Activated naive CD4-positive, alpha-beta T cell treated with anti-CD3 and anti-CD28 coated beads for 36 hours (primary cell): ENCODE measurements at regions of chr5 and their contacts with region 1.

Region 1: GRCh38 chr5:44536650-44537260 is 147.5 kb upstream of the FGF10 start:
- DNase-seq: peak; percentile 17
- H3K4me3 Mint-ChIP-seq: no peak overlapping the region
- H3K27ac Mint-ChIP-seq: no peak overlapping the region
- H3K4me1 Mint-ChIP-seq: no peaks in the 10 kb centered on the region
- H3K27me3 Mint-ChIP-seq: no peaks in the 10 kb centered on the region

Region 2: DNA sequence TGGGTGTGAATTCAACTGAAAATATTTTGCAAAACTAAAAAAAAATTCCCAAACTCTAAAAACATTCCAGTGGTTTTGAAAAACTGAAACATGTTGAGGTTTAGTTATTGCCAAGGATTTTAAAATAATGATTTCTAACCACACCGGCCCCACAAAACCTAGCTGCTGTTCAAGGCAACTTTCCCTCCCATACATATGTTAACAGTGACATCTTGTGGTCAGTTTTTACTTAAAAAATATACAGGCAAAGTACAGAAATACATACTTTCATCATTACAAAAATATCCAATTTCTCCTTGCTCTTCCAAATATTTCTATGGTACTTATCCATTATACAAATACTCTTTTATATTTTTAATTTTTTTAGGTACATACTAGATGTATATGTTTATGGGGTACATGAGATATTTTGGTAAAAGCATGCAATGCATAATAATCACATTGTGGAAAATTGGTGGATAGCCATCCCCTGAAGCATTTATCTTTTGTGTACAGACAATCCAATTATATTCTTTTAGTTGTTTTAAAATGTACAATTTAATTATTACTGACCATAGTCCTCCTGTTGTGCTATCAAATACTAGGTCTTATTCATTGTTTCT is 237.6 kb after region 1 on chr5:
- CTCF ChIA-PET with region 1: interaction called, 5 read pairs
- intact Hi-C with region 1: loop called (anchors 1 kb)
- DNase-seq: no peak
- H3K4me3 Mint-ChIP-seq: no peak overlapping the region
- H3K27ac Mint-ChIP-seq: no peak overlapping the region
- H3K4me1 Mint-ChIP-seq: no peaks in the 10 kb centered on the region
- H3K27me3 Mint-ChIP-seq: peaks cover 9% of the 10 kb centered on the region